A673 (cell line): ENCODE measurements at regions of chr20 and their contacts with region 1.

Region 1: GRCh38 chr20:49323622-49324238 is 45.9 kb upstream of the ZNFX1 start:
- DNase-seq: peak; percentile 73
- H3K4me3 ChIP-seq: no peak overlapping the region
- H3K27ac ChIP-seq: no peak overlapping the region
- H3K4me1 ChIP-seq: peaks cover 5% of the 10 kb centered on the region
- H3K27me3 ChIP-seq: peaks cover 60% of the 10 kb centered on the region
- CTCF ChIP-seq: peak; percentile 48

Region 2: DNA sequence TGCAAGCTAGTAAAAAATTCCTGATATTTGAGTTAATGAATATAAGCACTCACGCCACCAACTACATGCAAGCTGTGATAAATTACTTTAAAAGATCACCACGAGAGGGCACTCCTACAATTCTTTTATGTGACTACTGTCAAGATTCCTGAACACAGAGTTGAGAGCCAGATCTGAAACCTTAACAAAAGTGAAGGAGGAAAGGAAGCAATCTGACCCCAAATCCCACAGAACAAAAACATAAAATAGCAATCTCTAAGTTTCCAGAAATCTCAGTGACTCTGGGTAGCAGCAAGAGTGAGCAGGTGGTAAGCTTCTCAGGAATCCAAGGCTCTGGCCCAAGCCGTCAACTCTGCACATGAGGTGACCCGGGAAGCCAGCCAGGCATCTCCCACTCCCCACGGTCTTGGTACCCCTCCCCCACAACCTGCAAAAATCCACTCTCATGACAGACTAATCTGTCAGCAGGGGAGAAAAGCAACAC is 190.7 kb before region 1 on chr20:
- CTCF ChIA-PET with region 1: no interaction called
- POLR2A ChIA-PET with region 1: no interaction called
- intact Hi-C with region 1: loop called (anchors 10 kb)
- DNase-seq: peak; percentile 84
- H3K4me3 ChIP-seq: no peak overlapping the region
- H3K27ac ChIP-seq: no peak overlapping the region
- H3K4me1 ChIP-seq: no peaks in the 10 kb centered on the region
- H3K27me3 ChIP-seq: no peaks in the 10 kb centered on the region
- CTCF ChIP-seq: peak; percentile 74

Region 3: GRCh38 chr20:49245921-49246740 is 77.6 kb before region 1 on chr20:
- CTCF ChIA-PET with region 1: interaction called, 5 read pairs
- POLR2A ChIA-PET with region 1: no interaction called
- intact Hi-C with region 1: loop called (anchors 2 kb)
- DNase-seq: peak; percentile 75
- H3K4me3 ChIP-seq: no peak overlapping the region
- H3K27ac ChIP-seq: no peak overlapping the region
- H3K4me1 ChIP-seq: peaks cover 15% of the 10 kb centered on the region
- H3K27me3 ChIP-seq: no peaks in the 10 kb centered on the region
- CTCF ChIP-seq: peak; percentile 74

Region 4: DNA sequence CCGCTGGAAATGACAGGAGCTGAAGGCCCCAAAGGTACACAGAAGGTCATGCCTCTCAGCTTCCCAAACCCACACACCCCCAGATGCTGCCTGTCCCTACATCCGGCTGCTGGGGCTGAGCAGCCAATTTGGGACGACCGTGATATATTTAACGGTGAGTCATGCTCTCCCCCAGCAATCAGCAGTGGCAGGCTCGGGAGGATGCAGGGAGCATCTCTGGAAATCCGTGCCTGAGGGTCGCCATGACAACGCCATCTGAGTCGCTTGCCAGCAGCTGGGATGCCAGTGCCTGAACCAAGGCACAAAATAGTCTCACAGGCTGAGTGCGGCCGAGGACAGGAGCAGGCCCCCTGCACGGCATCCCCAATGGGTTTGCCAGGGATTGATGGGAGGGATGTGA is 100.8 kb after region 1 on chr20:
- CTCF ChIA-PET with region 1: no interaction called
- POLR2A ChIA-PET with region 1: no interaction called
- intact Hi-C with region 1: no loop called
- DNase-seq: peak; percentile 9
- H3K4me3 ChIP-seq: no peak overlapping the region
- H3K27ac ChIP-seq: no peak overlapping the region
- H3K4me1 ChIP-seq: no peaks in the 10 kb centered on the region
- H3K27me3 ChIP-seq: peaks cover 18% of the 10 kb centered on the region
- CTCF ChIP-seq: no peak

Region 5: GRCh38 chr20:49484180-49485140 is 160.7 kb after region 1 on chr20:
- CTCF ChIA-PET with region 1: no interaction called
- POLR2A ChIA-PET with region 1: no interaction called
- intact Hi-C with region 1: no loop called
- DNase-seq: peak; percentile 86
- H3K4me3 ChIP-seq: peak overlapping the region; percentile 33
- H3K27ac ChIP-seq: no peak overlapping the region
- H3K4me1 ChIP-seq: no peaks in the 10 kb centered on the region
- H3K27me3 ChIP-seq: peaks cover 74% of the 10 kb centered on the region
- CTCF ChIP-seq: peak; percentile 85